ENCODE measurements at regions of chr13 and their contacts with region 1.

Region 1: DNA sequence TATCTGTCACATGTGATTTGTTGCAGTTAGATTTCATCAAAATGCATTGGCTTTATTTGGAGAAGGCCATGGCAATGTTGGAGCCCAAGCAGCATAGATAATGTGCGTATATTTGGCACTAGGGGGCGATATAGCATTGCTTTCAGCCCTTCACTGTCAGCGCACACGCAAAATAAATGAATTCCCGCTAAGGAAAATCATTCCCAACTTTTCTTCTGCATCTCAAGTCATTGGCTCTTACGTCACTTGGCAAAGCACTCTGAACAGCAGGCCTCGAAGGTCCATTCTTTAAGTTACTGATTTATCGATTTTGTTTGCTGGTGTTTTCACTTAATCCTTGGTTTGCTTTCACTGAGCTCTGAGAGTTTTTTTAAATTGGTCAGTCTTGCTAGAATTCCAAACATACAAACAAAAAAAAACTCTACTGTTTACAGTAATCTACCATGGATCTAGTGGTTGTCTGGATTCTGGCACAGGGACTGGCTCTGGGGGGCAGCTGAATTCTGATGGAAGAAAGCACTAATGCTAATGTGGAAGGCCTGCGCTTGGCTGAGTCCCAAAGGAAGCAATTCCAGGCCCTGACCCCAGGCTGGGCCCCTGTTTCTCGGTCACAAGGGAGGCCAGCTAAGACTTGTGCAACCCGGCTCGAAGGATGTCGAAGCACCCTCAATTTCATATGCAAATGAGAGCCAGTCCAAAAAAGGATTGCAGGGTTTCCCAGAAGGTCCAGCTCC is 97.7 kb upstream of the IPO5 start:
- DNase-seq: peak; percentile 44
- ATAC-seq: peak; percentile 86 to 91

Region 2: GRCh38 chr13:97911311-97912128 is 55.8 kb after region 1 on chr13:
- intact Hi-C with region 1: loop called (anchors 10 kb)
- DNase-seq: no peak
- ATAC-seq: no peak

Region 3: DNA sequence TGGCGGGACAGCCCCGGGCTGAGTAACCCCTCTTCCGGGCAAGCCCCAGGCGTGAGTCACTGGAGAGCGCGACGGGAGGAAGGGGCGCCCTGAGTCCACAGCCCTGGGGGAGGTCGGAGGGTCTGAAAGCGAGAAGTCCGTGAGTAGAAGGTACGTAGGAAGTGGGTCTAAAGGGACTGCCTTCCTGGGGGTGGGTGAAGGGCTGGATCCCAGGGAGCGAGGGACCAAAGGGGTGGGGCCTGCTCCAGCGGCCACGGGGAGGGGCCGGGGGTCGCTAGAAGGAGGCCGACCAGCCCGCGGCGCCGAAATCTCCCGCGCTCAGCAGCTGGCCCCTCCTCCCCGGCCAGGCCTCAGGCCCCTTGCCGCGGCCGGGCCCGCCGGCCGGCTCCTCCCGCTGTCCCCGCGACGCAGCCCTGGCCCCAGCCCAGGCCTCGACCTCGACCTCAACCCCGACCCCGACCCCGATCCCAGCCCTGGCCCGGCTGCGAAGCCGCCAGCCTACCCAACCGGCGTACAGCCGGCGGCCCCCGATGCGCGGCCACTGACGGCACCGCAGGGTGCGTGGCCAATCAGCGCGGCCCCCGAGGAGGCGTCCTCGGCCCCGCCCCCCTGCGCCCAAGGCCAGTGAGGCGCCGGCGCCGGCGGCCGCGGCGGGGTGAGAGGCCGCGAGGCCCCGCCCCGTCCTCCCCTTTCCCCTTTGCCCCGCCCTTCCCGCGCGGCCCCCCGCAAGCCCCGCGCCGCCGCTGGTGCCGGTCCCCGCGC is 120.3 kb after region 1 on chr13:
- intact Hi-C with region 1: loop called (anchors 5 to 10 kb)
- DNase-seq: peak; percentile 93
- ATAC-seq: peak; percentile 98 to 99

Region 4: GRCh38 chr13:98672944-98673545 is 817.3 kb after region 1 on chr13:
- intact Hi-C with region 1: loop called in 1 of 2 experiments (anchors 10 kb)
- DNase-seq: peak; percentile 73
- ATAC-seq: peak; percentile 88 to 91

Region 5: DNA sequence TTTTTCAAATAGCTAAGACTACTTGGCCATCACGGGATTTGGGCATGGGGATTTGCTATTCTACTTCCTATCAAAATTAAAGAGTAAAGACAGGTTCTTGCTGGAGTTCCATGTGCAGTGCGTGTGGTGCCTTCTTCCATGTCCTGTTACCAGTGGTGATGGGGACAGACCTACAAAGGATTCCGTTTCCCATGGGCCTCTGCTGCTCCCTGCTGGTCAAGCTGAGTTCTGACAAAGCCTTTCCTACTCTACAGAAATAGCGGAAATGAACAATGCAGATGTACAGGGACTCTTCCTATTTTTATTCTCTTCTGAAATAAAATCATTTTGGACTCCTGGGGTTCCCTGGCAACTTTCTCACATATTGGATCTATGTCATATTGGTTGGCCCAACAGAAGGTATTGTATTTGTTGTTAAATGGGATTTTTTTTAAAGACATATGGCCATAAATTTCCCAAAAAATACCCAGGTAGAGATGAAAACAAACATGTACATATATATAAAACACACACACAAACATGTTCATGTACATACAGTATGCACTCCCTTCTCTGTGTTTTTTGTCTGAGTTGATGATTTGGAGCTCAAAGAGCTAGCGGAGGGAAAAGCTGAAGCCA is 987.2 kb after region 1 on chr13:
- intact Hi-C with region 1: loop called in 1 of 2 experiments (anchors 10 kb)
- DNase-seq: peak; percentile 52
- ATAC-seq: peak; percentile 78 to 83